CD14-positive monocyte (primary cell): ENCODE measurements at regions of chr16 and their contacts with region 1.

Region 1: DNA sequence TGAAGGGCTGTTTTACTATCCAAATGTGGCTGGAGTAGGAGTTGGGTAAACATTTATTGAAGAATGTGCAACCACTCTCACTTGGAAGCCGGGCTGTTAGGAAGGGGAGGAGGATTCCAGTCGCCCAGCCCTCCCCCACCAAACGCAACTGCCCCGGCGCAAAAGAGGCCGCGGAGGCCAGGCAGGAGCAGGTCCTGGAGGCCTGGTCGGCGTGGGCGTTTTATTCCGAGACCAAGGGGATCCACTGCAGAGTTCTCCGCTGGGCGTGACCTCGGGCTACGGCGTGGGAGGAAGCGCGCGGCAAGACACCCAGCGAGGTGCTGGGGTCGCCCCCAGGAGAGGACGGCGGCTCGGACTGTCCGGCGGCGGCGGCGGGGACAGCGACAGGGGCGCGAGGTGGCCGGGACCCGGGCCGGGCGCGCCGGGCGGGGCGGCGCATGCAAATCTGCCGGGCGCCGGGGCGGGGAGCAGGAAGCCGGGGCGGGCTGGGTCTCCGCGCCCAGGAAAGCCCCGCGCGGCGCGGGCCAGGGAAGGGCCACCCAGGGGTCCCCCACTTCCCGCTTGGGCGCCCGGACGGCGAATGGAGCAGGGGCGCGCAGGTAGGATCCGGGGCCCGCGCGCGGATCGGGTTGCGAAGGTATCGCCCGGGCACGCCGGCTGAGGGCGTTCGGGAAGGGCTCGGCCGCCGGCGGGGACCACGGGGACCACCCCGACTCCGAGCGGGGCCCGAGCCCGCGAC is at the start of gene IL4R:
- DNase-seq: peak; percentile 53 to 64 (median 56)
- H3K4me3 ChIP-seq: peak within 1 kb of the TSS; percentile 64 to 95 (median 90)
- H3K4me3 Mint-ChIP-seq: peak within 1 kb of the TSS; percentile 88 to 97
- H3K27ac ChIP-seq: peak within 1 kb of the TSS; percentile 77 to 99
- H3K27ac Mint-ChIP-seq: peak within 1 kb of the TSS; percentile 88 to 98 (median 96)
- H3K4me1 ChIP-seq: peaks cover 49 to 52% of the 10 kb centered on the region in 2 donors
- H3K4me1 Mint-ChIP-seq: peaks cover 53% of the 10 kb centered on the region
- H3K27me3 ChIP-seq: no peaks in the 10 kb centered on the region
- H3K27me3 Mint-ChIP-seq: peaks cover 0 to 4% (median 3%) of the 10 kb centered on the region in 3 donors
- CTCF ChIP-seq: no peak
- polyA plus RNA-seq, gene IL4R: 25.1 to 80.4 (median 35.6) TPM

Region 2: DNA sequence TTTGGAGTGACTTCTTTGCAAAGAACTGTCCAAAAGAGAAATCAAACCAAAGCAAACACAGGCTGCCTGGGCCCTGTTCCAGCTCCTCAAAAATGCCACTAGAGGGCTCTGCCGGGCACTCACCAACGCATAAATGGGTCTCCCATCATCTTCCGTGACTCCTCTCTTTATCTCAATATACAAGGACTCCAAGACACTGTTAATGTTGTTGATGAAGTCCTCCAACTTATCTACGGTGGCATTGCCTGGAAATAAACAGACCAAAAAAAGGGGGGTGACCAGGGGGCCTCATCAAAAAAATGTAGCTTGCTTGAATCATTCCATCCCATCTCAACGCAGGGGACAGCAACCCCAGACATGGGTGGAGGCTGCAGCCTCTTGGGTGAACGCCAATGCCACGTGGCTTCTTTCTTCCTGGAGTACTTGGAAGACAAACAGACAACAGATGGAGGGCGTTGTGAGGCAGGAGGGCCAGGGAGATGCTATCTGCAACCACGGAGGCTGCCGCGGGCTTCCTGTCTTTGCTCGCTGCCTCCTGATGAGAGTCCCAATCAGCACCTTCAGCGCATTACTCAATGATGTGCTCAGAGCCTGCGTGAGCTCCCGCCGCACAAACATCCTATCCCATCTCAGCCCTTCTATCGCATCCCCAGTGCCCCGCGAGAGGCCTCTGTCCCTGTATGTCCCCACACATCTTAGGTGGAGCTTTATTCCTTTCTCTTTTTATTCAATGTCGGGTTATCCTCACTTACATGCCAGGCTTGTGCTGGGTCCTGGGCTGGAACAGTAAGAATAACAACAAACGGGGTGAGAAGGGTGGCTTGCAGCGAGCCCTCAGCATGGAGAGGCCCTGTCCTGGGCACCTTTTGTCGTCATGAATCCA is 78.3 kb before region 1 on chr16:
- intact Hi-C with region 1: loop called in 1 of 2 experiments (anchors 5 kb)
- DNase-seq: peak; percentile 47 to 66 (median 66)
- H3K4me3 ChIP-seq: peak overlapping the region; percentile 10 to 71 (median 29)
- H3K4me3 Mint-ChIP-seq: peak overlapping the region; percentile 80 to 89
- H3K27ac ChIP-seq: peak overlapping the region in 1 of 2 donors; percentile 54
- H3K27ac Mint-ChIP-seq: peak overlapping the region in 4 of 7 donors; percentile 15 to 83 (median 45)
- H3K4me1 ChIP-seq: peaks cover 36 to 53% of the 10 kb centered on the region in 2 donors
- H3K4me1 Mint-ChIP-seq: peaks cover 52% of the 10 kb centered on the region
- H3K27me3 ChIP-seq: no peaks in the 10 kb centered on the region
- H3K27me3 Mint-ChIP-seq: peaks cover 0 to 7% (median 2%) of the 10 kb centered on the region in 3 donors
- CTCF ChIP-seq: peak; percentile 86

Region 3: GRCh38 chr16:27253526-27253930 is 60.1 kb before region 1 on chr16:
- intact Hi-C with region 1: no loop called
- DNase-seq: peak in 1 of 3 donors; percentile 42
- H3K4me3 ChIP-seq: no peak overlapping the region
- H3K4me3 Mint-ChIP-seq: no peak overlapping the region
- H3K27ac ChIP-seq: no peak overlapping the region
- H3K27ac Mint-ChIP-seq: peak overlapping the region in 1 of 7 donors; percentile 32
- H3K4me1 ChIP-seq: no peaks in the 10 kb centered on the region
- H3K4me1 Mint-ChIP-seq: peaks cover 5% of the 10 kb centered on the region
- H3K27me3 ChIP-seq: no peaks in the 10 kb centered on the region
- H3K27me3 Mint-ChIP-seq: peaks cover 0 to 3% (median 0%) of the 10 kb centered on the region in 3 donors
- CTCF ChIP-seq: no peak

Region 4: DNA sequence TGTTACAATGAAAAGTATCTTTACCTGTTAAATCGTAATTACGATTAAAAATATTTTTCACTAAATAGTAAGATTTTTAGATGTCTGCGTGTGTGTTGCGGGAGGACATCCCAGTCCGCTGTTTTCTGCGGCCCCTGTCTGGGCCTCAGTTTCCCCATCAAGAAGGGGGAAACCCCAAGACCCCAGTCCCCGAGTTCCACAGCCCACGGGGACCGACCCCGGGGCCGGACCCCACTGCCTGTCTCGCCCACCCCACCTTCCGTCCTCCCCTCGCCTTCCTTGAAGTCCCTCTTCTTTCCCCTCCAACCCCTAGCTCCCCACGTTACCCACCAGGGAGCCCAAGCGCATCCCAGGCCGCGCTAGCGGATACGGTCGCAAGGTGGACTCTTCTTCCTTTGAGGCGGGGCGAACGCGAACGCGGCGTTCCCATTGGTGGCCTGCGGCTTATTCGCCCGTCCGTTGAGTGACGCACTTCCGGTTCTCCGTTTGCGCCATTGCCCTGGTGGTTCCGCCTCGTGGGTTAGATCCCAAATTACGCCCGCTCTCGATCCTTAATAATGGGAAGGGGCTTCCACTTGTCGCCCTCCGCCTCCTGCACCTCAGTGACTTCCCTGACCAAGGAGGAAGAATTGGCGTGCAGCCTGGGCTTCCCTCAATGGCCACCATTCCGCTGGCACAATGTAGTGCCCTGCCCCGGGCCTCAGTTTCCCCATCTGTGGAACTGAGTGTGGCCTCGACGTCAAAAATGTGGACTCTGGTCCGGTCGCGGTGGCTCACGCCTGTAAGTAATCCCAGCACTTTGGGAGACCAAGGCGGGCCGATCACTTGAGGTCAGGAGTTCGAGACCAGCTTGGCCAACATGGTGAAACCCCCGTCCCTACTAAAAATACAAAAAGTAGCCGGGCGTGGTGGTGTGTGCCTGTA is 45.0 kb before region 1 on chr16 and contains the start of gene NSMCE1:
- intact Hi-C with region 1: loop called (anchors 5 to 10 kb)
- DNase-seq: peak; percentile 96 to 97 (median 97)
- H3K4me3 ChIP-seq: peak within 1 kb of the TSS; percentile 77 to 94 (median 89)
- H3K4me3 Mint-ChIP-seq: peak within 1 kb of the TSS; percentile 87 to 92
- H3K27ac ChIP-seq: peak within 1 kb of the TSS; percentile 70 to 98
- H3K27ac Mint-ChIP-seq: peak within 1 kb of the TSS; percentile 93 to 98 (median 96)
- H3K4me1 ChIP-seq: peaks cover 25 to 46% of the 10 kb centered on the region in 2 donors
- H3K4me1 Mint-ChIP-seq: peaks cover 43% of the 10 kb centered on the region
- H3K27me3 ChIP-seq: no peaks in the 10 kb centered on the region
- H3K27me3 Mint-ChIP-seq: no peaks in the 10 kb centered on the region
- CTCF ChIP-seq: no peak
- polyA plus RNA-seq, gene NSMCE1: 19.6 to 85.2 (median 82.6) TPM

Region 5: GRCh38 chr16:27273670-27274423 is 39.7 kb before region 1 on chr16:
- intact Hi-C with region 1: loop called (anchors 5 to 10 kb)
- DNase-seq: peak in 1 of 3 donors; percentile 28
- H3K4me3 ChIP-seq: no peak overlapping the region
- H3K4me3 Mint-ChIP-seq: no peak overlapping the region
- H3K27ac ChIP-seq: no peak overlapping the region
- H3K27ac Mint-ChIP-seq: peak overlapping the region in 2 of 7 donors; percentile 51 to 82
- H3K4me1 ChIP-seq: peaks cover 28 to 30% of the 10 kb centered on the region in 2 donors
- H3K4me1 Mint-ChIP-seq: peaks cover 38% of the 10 kb centered on the region
- H3K27me3 ChIP-seq: no peaks in the 10 kb centered on the region
- H3K27me3 Mint-ChIP-seq: peaks cover 0 to 4% (median 0%) of the 10 kb centered on the region in 3 donors
- CTCF ChIP-seq: no peak

Region 6: DNA sequence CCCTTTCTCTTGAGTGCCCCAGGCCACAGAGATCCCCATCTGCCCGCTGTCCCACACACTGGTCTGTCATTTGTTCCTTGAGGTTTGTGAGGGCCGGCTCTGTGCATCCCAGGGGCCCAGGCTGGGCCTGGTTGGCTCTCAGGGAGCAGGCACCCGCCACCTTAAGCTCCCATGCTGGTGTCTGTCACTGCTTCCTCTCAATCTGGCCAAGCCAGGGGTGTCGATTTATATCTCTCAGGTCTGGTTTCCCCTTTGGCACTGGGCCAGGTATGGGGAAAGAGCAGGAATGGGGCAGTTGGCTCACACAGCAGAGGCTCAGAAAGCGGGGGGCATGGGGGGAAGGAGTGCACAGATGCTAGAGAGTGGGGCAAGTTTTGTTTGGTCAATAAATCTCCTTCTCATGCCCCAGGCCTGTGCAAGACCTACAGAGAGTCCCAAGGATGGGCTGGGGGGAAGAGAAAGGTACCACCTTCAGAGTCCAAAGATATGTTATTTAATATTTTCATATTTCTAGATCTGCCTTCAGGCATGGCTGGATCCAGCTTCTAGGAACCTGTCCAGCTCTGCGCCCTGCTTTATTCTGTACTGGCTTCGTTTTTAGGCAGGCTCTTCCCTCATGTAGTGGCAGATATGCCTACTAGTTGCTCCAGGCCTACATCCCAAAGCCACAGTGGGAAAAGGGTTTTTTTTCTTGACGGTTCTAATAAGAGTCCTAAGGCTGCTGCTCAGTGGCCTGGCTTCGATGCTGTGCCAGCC is 34.5 kb after region 1 on chr16:
- intact Hi-C with region 1: loop called in 1 of 2 experiments (anchors 5 kb)
- DNase-seq: peak in 2 of 3 donors; percentile 29 to 41
- H3K4me3 ChIP-seq: no peak overlapping the region
- H3K4me3 Mint-ChIP-seq: no peak overlapping the region
- H3K27ac ChIP-seq: peak overlapping the region in 1 of 2 donors; percentile 82
- H3K27ac Mint-ChIP-seq: peak overlapping the region; percentile 54 to 93 (median 79)
- H3K4me1 ChIP-seq: peaks cover 18 to 25% of the 10 kb centered on the region in 2 donors
- H3K4me1 Mint-ChIP-seq: peaks cover 22% of the 10 kb centered on the region
- H3K27me3 ChIP-seq: no peaks in the 10 kb centered on the region
- H3K27me3 Mint-ChIP-seq: peaks cover 0 to 2% (median 0%) of the 10 kb centered on the region in 3 donors
- CTCF ChIP-seq: no peak

Region 7: DNA sequence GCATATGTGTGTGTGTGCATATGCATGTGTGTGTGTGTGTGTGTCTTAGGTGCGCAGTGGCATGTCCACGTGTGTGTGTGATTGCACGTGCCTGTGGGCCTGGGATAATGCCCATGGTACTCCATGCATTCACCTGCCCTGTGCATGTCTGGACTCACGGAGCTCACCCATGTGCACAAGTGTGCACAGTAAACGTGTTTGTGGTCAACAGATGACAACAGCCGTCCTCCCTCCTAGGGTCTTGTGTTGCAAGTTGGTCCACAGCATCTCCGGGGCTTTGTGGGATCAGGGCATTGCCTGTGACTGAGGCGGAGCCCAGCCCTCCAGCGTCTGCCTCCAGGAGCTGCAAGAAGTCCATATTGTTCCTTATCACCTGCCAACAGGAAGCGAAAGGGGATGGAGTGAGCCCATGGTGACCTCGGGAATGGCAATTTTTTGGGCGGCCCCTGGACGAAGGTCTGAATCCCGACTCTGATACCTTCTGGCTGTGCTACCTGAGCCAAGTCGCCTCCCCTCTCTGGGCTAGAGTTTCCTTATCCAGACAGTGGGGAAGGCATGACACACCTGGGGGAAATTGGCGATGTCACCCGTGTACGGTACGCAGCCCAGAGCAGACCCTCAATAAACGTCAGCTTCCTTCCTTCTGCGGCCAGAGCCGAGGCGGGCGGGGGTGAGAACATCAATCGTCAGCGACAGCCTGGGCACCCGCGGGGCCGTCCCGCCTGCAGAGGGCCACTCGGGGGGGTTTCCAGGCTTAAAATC is 136.0 kb after region 1 on chr16:
- intact Hi-C with region 1: no loop called
- DNase-seq: peak in 1 of 3 donors; percentile 29
- H3K4me3 ChIP-seq: no peak overlapping the region
- H3K4me3 Mint-ChIP-seq: peak overlapping the region; percentile 24 to 63
- H3K27ac ChIP-seq: no peak overlapping the region
- H3K27ac Mint-ChIP-seq: peak overlapping the region in 2 of 7 donors; percentile 21 to 42
- H3K4me1 ChIP-seq: peaks cover 5 to 10% of the 10 kb centered on the region in 2 donors
- H3K4me1 Mint-ChIP-seq: peaks cover 15% of the 10 kb centered on the region
- H3K27me3 ChIP-seq: peaks cover 3 to 29% of the 10 kb centered on the region in 2 donors
- H3K27me3 Mint-ChIP-seq: peaks cover 31 to 50% (median 31%) of the 10 kb centered on the region in 3 donors
- CTCF ChIP-seq: no peak

Region 8: GRCh38 chr16:27495191-27495590 is 181.6 kb after region 1 on chr16:
- intact Hi-C with region 1: no loop called
- DNase-seq: no peak
- H3K4me3 ChIP-seq: no peak overlapping the region
- H3K4me3 Mint-ChIP-seq: no peak overlapping the region
- H3K27ac ChIP-seq: no peak overlapping the region
- H3K27ac Mint-ChIP-seq: peak overlapping the region in 1 of 7 donors; percentile 16
- H3K4me1 ChIP-seq: no peaks in the 10 kb centered on the region
- H3K4me1 Mint-ChIP-seq: no peaks in the 10 kb centered on the region
- H3K27me3 ChIP-seq: no peaks in the 10 kb centered on the region
- H3K27me3 Mint-ChIP-seq: peaks cover 0 to 2% (median 0%) of the 10 kb centered on the region in 3 donors
- CTCF ChIP-seq: no peak